HEK293T (cell line): ENCODE measurements at regions of chr9 and their contacts with region 1.

Region 1: DNA sequence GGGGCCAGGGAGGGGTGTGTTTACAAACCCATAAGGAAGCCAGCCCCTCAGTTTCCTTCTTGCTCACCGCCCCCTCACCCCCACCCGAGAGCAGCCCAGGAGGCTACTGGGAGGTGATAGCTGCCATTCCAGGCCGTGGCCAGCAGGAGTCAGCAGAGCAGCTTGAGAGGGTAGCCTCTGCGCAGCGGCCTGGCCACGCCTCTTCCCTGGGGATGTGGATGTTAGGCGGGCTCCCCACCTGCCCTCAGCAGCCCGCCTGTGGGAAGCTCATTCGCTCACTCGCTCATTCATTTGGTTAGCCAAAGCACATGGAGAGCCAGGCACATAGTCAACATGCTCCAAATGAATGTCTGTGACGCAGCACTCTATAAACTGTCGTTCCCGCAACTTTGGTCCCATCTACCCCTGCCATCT is 6.1 kb upstream of the DPM2 start:
- DNase-seq: peak; percentile 88

Region 2: GRCh38 chr9:127847155-127847463 is 96.6 kb before region 1 on chr9:
- CTCF ChIA-PET with region 1: no interaction called
- POLR2A ChIA-PET with region 1: no interaction called
- DNase-seq: no peak

Region 3: GRCh38 chr9:127955294-127956035 is 11.7 kb after region 1 on chr9:
- CTCF ChIA-PET with region 1: interaction called, 38 read pairs
- POLR2A ChIA-PET with region 1: no interaction called
- DNase-seq: peak; percentile 45

Region 4: DNA sequence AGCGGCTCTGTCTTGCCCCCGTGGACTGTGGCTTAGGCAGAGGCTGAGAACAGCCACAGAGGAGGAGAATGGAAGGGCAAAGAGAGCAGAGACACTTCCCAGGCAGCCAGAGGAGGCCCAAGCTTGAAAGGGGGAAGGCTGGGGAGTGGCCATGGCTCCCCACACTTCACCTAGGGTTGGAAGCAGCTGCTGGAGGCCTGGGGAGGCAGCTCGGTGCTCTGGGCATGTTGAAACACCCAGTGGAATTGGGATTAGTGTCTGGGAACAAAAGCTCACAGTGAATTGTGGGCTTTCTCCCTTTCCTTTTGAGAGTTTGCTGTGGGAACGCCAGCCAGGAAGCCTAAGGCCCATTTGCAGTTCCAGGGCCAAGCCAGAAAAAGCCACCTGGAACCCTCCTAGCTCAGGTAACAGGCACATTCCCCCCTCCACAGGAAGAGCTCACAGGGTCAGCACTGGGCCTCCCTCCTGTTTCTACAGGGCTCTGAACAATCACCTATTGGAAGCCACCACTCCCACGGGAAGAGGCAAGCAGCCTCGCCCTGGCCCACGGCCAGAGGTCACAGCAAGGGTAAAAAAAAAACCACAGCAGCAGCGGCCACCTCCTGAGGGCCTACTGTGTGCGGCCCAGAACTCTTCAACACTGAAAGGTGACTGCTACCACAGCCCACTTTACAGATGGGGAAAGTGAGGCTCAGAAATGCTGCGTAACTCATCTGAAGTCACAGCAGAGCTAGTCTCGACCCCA is 16.8 kb after region 1 on chr9:
- CTCF ChIA-PET with region 1: interaction called, 38 read pairs
- POLR2A ChIA-PET with region 1: interaction called, 4 read pairs
- DNase-seq: no peak

Region 5: DNA sequence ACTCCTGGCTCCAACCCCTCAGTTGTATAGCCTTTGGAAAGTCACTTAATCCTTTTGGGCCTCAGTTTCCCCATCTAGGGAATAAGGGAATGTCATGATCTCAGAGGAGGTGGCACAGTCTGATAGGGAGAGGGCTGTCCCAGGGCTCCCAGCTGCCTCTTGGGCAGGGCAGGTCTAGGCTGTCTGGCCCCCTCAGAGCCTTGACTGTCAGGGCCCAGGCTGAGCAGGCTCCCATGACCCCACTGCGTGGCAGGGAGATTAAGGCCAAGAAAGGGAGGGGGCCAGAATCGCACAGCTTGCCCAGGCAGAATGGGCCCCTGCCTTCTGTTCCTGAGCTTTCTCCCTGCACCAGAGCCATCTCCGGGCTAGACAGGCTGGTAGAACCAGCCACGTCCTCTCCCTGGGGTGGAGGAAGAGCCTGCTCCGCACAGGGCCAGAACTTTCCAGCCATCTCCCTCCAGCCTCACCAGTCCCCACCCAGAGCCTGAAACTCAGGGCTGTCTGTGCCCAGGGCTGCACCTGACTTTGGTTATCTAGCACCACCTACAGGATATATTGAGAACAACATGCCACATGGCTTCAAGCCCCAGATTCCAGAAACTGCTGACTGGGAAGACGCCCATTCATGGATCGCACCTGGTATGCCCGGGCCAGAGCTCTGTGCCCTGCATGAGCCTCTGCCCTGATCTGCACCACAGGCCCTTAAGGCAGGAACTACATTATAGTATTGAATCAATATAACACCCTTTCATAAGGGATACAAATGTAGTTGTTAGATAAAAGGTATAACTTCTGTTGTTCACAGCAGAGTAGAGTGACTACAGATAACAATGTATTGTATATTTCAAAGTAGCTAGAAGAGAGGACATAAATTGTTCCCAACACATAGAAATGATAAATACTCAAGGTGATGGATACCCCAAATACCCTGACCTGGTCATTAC is 91.4 kb after region 1 on chr9:
- CTCF ChIA-PET with region 1: interaction called, 19 read pairs
- POLR2A ChIA-PET with region 1: interaction called, 3 read pairs
- DNase-seq: peak; percentile 83

Region 6: DNA sequence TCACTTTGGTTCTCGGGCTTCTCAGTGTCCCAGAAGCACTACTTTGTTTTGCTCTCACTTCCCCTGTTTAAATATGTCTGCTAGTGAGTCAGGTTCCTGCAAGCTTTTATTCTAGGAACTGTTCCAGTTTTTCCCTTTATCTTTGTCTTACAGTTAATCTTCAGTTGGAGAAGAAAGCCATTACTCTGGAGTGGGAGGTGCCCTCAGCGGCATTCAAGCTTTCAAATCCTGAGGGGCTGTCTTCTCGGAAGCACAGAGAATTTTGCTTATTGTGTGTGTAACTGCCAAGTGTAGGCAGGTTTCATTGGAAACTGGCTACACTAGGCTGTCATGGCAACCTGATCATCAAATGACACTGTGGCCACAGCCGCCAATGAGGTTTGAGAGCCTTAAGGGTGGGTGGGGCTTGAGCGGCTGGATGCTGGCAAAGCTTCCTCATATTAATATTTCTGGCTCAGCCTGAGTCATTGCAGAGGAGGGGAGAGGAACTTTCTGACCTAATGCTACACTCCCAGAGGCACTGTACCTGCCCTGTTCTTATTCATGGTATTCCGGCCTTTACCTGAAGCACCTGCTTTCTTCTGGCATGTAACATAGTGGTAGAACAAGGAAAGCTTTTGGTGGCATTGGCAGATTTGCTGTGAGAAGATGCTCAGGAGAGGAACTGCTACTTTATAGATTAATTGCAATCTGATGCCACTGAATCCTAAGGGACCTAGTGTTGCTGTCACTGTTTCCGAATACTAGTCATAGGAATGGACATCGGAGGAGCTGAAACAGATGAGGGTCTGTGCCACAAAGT is 150.6 kb after region 1 on chr9:
- CTCF ChIA-PET with region 1: no interaction called
- POLR2A ChIA-PET with region 1: no interaction called
- DNase-seq: peak; percentile 76